B cell (primary cell): ENCODE measurements at regions of chr2 and their contacts with region 1.

Region 1: GRCh38 chr2:27370026-27370815 is at the starts of genes EIF2B4 and SNX17:
- DNase-seq: peak; percentile 99
- ATAC-seq: peak; percentile 83
- H3K4me3 ChIP-seq: peak within 1 kb of the TSS; percentile 86 to 96 (median 88)
- H3K4me3 Mint-ChIP-seq: peak within 1 kb of the TSS; percentile 96
- H3K27ac ChIP-seq: peak within 1 kb of the TSS; percentile 84 to 95
- H3K27ac Mint-ChIP-seq: peak within 1 kb of the TSS; percentile 100
- H3K4me1 ChIP-seq: peaks cover 31 to 34% of the 10 kb centered on the region in 2 donors
- H3K4me1 Mint-ChIP-seq: peaks cover 31% of the 10 kb centered on the region
- H3K27me3 ChIP-seq: no peaks in the 10 kb centered on the region
- H3K27me3 Mint-ChIP-seq: no peaks in the 10 kb centered on the region
- CTCF ChIP-seq: peak; percentile 77
- total RNA-seq, gene EIF2B4: 50.5 and 56.7 TPM in 2 replicates
- total RNA-seq, gene SNX17: 158 and 162 TPM in 2 replicates

Region 2: DNA sequence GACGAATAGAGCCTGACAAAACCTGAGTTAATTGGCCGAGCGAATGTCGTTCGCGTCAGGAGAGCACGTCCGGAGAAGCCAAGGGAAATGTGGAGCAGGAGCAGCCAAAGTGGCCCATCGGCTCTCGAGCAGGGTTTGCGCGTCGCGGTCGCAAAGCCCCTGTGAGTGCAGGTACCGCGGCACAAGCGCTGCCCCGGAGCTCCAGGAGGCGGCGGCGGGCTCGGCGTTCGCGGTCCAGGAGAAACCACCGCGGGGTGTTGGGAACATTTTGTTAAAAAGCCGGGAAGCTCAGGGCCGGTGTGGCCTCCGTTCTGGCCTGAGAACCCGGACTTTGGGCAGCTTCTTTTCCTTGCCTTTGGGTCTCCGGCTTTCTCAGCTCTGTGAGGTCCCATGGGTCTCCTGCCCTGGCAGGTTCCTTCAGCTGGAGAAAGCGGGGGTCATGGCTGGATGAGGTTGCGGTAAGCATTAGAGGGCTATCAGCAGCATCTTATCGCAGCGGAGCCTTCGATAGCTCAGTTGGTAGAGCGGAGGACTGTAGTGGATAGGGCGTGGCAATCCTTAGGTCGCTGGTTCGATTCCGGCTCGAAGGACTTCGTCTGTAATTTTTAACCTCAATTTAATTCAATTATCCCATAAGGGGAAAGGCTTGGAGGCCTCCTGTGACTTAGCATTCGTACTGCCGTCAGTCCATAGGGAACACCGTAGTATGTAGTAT is 319.8 kb before region 1 on chr2:
- CTCF ChIA-PET with region 1: no interaction called
- POLR2A ChIA-PET with region 1: no interaction called
- intact Hi-C with region 1: loop called (anchors 1 kb)
- DNase-seq: peak; percentile 98
- ATAC-seq: peak; percentile 60
- H3K4me3 ChIP-seq: peak overlapping the region; percentile 57 to 94 (median 81)
- H3K4me3 Mint-ChIP-seq: peak overlapping the region; percentile 95
- H3K27ac ChIP-seq: peak overlapping the region; percentile 72 to 80
- H3K27ac Mint-ChIP-seq: peak overlapping the region; percentile 100
- H3K4me1 ChIP-seq: peaks cover 4 to 15% of the 10 kb centered on the region in 2 donors
- H3K4me1 Mint-ChIP-seq: peaks cover 17% of the 10 kb centered on the region
- H3K27me3 ChIP-seq: no peaks in the 10 kb centered on the region
- H3K27me3 Mint-ChIP-seq: peaks cover 7% of the 10 kb centered on the region
- CTCF ChIP-seq: peak; percentile 50

Region 3: GRCh38 chr2:27211829-27212627 is 158.2 kb before region 1 on chr2 and contains the starts of genes ATRAID and SLC5A6:
- CTCF ChIA-PET with region 1: no interaction called
- POLR2A ChIA-PET with region 1: interaction called, 6 read pairs
- intact Hi-C with region 1: loop called (anchors 1 kb)
- DNase-seq: peak; percentile 95
- ATAC-seq: peak; percentile 90
- H3K4me3 ChIP-seq: peak within 1 kb of the TSS; percentile 72 to 100 (median 90)
- H3K4me3 Mint-ChIP-seq: peak within 1 kb of the TSS; percentile 86
- H3K27ac ChIP-seq: peak within 1 kb of the TSS; percentile 100
- H3K27ac Mint-ChIP-seq: peak within 1 kb of the TSS; percentile 92
- H3K4me1 ChIP-seq: peaks cover 18 to 19% of the 10 kb centered on the region in 2 donors
- H3K4me1 Mint-ChIP-seq: peaks cover 33% of the 10 kb centered on the region
- H3K27me3 ChIP-seq: no peaks in the 10 kb centered on the region
- H3K27me3 Mint-ChIP-seq: no peaks in the 10 kb centered on the region
- CTCF ChIP-seq: no peak
- total RNA-seq, gene ATRAID: 88.8 and 89.9 TPM in 2 replicates
- total RNA-seq, gene SLC5A6: 46.1 and 50.8 TPM in 2 replicates

Region 4: DNA sequence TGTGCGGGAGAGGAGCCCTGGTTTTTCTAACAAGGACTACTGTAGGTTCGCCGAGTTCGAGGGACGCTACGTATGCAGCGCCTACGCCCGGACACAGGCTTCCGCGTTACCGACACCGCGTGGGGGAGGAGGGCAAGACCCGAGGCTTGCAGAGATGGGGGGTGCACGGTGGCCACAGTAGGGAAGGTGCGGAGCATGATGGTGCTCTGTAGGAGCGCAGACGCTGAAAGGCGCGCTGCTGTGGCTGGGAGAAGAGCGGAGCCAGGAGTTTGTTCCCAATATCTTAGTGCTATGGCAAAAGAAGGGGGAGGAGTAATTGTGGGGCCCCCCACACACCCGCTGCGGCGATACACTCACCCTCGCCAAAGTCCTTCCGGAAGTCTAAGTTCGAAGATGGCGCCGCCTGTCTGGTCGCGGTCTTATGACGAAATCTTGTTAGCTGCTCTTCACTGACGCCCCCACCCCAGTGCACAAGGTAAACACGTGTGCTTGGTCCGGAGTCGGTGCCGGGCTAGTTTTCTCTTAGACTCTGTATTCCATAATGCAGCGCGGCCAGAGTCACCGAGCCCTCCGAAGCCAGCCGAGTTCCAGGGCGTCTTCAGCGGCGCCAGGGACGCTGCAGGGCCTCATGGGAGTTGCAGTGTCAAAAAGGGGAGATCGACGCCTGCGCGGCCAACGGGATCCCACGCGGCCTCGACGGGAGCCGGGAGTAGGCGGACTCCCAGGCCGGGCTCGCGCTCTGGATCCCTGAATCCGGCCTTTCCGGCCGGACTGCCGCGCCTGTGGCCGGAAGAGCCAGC is 13.6 kb before region 1 on chr2 and contains the start of gene GTF3C2:
- CTCF ChIA-PET with region 1: interaction called, 14 read pairs
- POLR2A ChIA-PET with region 1: interaction called, 34 read pairs
- intact Hi-C with region 1: loop called (anchors 1 kb)
- DNase-seq: peak; percentile 98
- ATAC-seq: peak; percentile 82
- H3K4me3 ChIP-seq: peak within 1 kb of the TSS; percentile 64 to 90 (median 82)
- H3K4me3 Mint-ChIP-seq: peak within 1 kb of the TSS; percentile 97
- H3K27ac ChIP-seq: peak within 1 kb of the TSS; percentile 86 to 88
- H3K27ac Mint-ChIP-seq: peak within 1 kb of the TSS; percentile 99
- H3K4me1 ChIP-seq: peaks cover 18 to 25% of the 10 kb centered on the region in 2 donors
- H3K4me1 Mint-ChIP-seq: peaks cover 48% of the 10 kb centered on the region
- H3K27me3 ChIP-seq: no peaks in the 10 kb centered on the region
- H3K27me3 Mint-ChIP-seq: no peaks in the 10 kb centered on the region
- CTCF ChIP-seq: no peak
- total RNA-seq, gene GTF3C2: 114 and 121 TPM in 2 replicates

Region 5: DNA sequence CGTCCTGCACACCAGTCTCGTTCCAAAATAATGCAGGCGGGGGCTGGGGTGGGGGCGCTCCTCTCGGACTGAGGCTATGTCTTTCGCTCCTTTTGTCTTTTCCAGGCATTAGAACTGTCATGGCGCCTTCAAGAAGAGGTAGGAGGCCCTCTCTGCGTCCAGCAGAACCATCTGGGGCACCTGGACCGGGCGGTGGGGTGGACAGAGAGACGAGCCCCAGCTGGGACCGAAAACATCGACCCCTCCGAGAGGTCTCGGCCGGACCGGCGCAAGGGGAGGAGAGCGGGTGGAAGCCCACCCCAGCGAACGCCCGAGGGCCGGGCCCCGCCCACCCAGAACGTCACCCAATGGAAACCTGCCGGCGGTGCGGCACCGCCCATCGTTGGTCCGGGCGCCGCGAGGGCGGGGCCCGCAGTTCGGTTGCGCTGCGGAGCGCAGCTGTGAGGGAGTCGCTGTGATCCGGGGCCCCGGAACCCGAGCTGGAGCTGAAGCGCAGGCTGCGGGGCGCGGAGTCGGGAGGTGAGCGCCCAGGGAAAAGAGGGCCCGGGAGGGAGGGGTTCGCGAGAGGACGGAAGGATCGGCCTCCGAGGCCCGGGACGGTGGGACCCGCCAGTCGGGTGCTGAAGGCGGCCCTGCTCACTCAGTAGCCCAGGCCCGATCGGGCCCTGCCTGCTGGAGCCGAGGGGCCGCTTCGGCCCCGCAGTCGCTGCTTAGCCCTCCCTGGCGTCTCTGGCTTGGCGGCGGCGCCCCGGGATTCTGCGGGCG is 58.2 kb after region 1 on chr2 and contains the start of gene NRBP1:
- CTCF ChIA-PET with region 1: interaction called, 7 read pairs
- POLR2A ChIA-PET with region 1: interaction called, 7 read pairs
- intact Hi-C with region 1: loop called (anchors 1 kb)
- DNase-seq: peak; percentile 95
- ATAC-seq: peak; percentile 92
- H3K4me3 ChIP-seq: peak within 1 kb of the TSS; percentile 68 to 98 (median 88)
- H3K4me3 Mint-ChIP-seq: peak within 1 kb of the TSS; percentile 97
- H3K27ac ChIP-seq: peak within 1 kb of the TSS; percentile 82 to 86
- H3K27ac Mint-ChIP-seq: peak within 1 kb of the TSS; percentile 97
- H3K4me1 ChIP-seq: peaks cover 15 to 21% of the 10 kb centered on the region in 2 donors
- H3K4me1 Mint-ChIP-seq: peaks cover 29% of the 10 kb centered on the region
- H3K27me3 ChIP-seq: no peaks in the 10 kb centered on the region
- H3K27me3 Mint-ChIP-seq: no peaks in the 10 kb centered on the region
- CTCF ChIP-seq: no peak
- total RNA-seq, gene NRBP1: 109 and 115 TPM in 2 replicates

Region 6: GRCh38 chr2:27628767-27629709 is 258.8 kb after region 1 on chr2 and contains the starts of genes CCDC121 and GPN1:
- CTCF ChIA-PET with region 1: no interaction called
- POLR2A ChIA-PET with region 1: interaction called, 3 read pairs
- intact Hi-C with region 1: loop called (anchors 2 kb)
- DNase-seq: peak; percentile 94
- ATAC-seq: peak; percentile 100
- H3K4me3 ChIP-seq: peak within 1 kb of the TSS; percentile 83 to 98 (median 91)
- H3K4me3 Mint-ChIP-seq: no peak within 1 kb of the TSS
- H3K27ac ChIP-seq: peak within 1 kb of the TSS; percentile 70 to 83
- H3K27ac Mint-ChIP-seq: peak within 1 kb of the TSS; percentile 51
- H3K4me1 ChIP-seq: peaks cover 10 to 17% of the 10 kb centered on the region in 2 donors
- H3K4me1 Mint-ChIP-seq: peaks cover 24% of the 10 kb centered on the region
- H3K27me3 ChIP-seq: no peaks in the 10 kb centered on the region
- H3K27me3 Mint-ChIP-seq: no peaks in the 10 kb centered on the region
- CTCF ChIP-seq: no peak
- total RNA-seq, gene CCDC121: 1.3 and 2.2 TPM in 2 replicates
- total RNA-seq, gene GPN1: 26.0 and 27.8 TPM in 2 replicates